Naive thymus-derived CD4-positive, alpha-beta T cell (primary cell): ENCODE measurements at regions of chr13 and their contacts with region 1.

Region 1: DNA sequence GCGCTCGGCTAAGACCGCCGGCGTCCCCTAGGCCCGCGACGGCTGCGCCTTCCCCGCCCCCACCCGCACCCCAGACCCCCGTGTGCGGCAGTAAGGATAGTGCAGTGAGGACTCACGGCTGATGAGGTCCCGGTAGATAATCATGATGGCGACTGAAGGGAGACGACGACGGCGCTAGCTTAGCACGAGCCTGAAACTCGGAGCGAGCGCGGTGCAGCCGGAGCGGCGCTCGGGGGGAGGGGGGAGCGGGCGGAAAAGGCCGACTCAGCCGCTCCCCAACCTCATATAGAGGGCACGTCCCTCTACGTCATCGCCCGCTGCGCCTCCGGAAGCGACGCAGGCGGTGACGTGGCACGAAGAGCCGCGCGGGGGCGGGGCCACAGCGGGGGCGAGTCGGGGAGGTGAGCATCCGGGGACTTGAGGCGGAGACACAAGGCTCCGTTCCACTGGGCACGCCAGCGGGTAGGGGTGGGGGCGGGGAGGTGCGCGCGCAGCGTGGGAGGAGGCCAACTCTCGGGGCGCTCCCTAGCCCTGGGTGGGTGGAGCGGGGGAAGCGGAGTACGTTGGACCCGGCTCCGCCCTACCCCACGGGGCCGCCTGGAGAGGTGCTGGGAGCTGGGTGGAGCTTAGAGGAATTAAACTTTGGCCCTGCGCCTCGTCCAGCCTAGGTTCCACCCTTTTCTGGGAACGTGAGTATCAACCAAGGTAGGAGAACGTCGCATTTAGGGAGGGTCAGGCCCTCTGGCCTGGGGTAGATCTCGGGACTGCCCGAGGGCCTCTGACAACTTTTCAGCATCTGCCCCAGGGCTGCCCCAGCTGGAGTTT is at the start of gene TPT1:
- DNase-seq: peak; percentile 99 to 100 (median 99)
- ATAC-seq: peak; percentile 91
- H3K4me3 ChIP-seq: peak within 1 kb of the TSS; percentile 94
- H3K4me3 Mint-ChIP-seq: peak within 1 kb of the TSS; percentile 95 to 100 (median 98)
- H3K27ac ChIP-seq: peak within 1 kb of the TSS; percentile 99
- H3K27ac Mint-ChIP-seq: peak within 1 kb of the TSS; percentile 92 to 100 (median 99)
- H3K4me1 ChIP-seq: peaks cover 35 to 43% of the 10 kb centered on the region in 2 donors
- H3K4me1 Mint-ChIP-seq: peaks cover 35 to 70% (median 57%) of the 10 kb centered on the region in 7 donors
- H3K27me3 ChIP-seq: no peaks in the 10 kb centered on the region
- H3K27me3 Mint-ChIP-seq: no peaks in the 10 kb centered on the region
- total RNA-seq, gene TPT1: 4,230 to 13,134 (median 7,796) TPM

Region 2: GRCh38 chr13:44988973-44989817 is 351.9 kb before region 1 on chr13 and contains the starts of genes GPALPP1 and NUFIP1:
- CTCF ChIA-PET with region 1: no interaction called
- POLR2A ChIA-PET with region 1: no interaction called
- intact Hi-C with region 1: loop called (anchors 1 kb)
- DNase-seq: peak; percentile 79 to 94 (median 90)
- ATAC-seq: peak; percentile 98
- H3K4me3 ChIP-seq: peak within 1 kb of the TSS; percentile 94
- H3K4me3 Mint-ChIP-seq: peak within 1 kb of the TSS; percentile 96 to 100 (median 98)
- H3K27ac ChIP-seq: peak within 1 kb of the TSS; percentile 95
- H3K27ac Mint-ChIP-seq: peak within 1 kb of the TSS; percentile 91 to 99 (median 98)
- H3K4me1 ChIP-seq: peaks cover 18 to 27% of the 10 kb centered on the region in 2 donors
- H3K4me1 Mint-ChIP-seq: peaks cover 42 to 81% (median 68%) of the 10 kb centered on the region in 7 donors
- H3K27me3 ChIP-seq: no peaks in the 10 kb centered on the region
- H3K27me3 Mint-ChIP-seq: no peaks in the 10 kb centered on the region
- total RNA-seq, gene GPALPP1: 29.7 to 43.1 (median 33.0) TPM
- total RNA-seq, gene NUFIP1: 3.7 to 6.6 (median 5.4) TPM

Region 3: DNA sequence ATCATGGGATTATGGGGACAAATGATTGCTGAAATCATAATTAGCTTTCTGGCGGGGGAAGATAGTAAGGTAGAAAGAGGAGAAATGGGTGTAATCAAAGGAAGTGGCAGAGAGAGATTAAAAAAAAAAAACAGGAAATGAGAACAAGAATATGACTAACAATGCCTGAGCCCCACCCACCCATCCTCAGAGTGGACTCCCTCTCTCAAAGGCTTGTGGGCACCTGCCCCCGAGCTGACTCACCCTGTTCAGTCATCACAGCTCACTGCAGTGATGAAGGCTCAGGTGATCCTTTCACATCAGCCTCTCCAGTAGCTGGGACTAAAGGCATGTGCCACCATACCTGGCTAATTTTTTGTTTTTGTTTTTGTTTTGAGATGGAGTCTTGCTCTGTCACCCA is 26.2 kb after region 1 on chr13:
- CTCF ChIA-PET with region 1: interaction called, 5 read pairs
- POLR2A ChIA-PET with region 1: interaction called, 112 read pairs
- intact Hi-C with region 1: loop called (anchors 1 kb)
- DNase-seq: peak; percentile 38 to 93 (median 82)
- ATAC-seq: peak; percentile 99
- H3K4me3 ChIP-seq: no peak overlapping the region
- H3K4me3 Mint-ChIP-seq: peak overlapping the region; percentile 48 to 80 (median 67)
- H3K27ac ChIP-seq: peak overlapping the region; percentile 31
- H3K27ac Mint-ChIP-seq: peak overlapping the region; percentile 81 to 96 (median 90)
- H3K4me1 ChIP-seq: peaks cover 25 to 27% of the 10 kb centered on the region in 2 donors
- H3K4me1 Mint-ChIP-seq: peaks cover 48 to 62% (median 60%) of the 10 kb centered on the region in 7 donors
- H3K27me3 ChIP-seq: no peaks in the 10 kb centered on the region
- H3K27me3 Mint-ChIP-seq: no peaks in the 10 kb centered on the region

Region 4: GRCh38 chr13:45417790-45418534 is 76.8 kb after region 1 on chr13 and contains the start of gene SLC25A30:
- CTCF ChIA-PET with region 1: no interaction called
- POLR2A ChIA-PET with region 1: interaction called, 21 read pairs
- intact Hi-C with region 1: loop called (anchors 1 kb)
- DNase-seq: peak; percentile 73 to 90 (median 87)
- ATAC-seq: peak; percentile 97
- H3K4me3 ChIP-seq: peak within 1 kb of the TSS; percentile 97
- H3K4me3 Mint-ChIP-seq: peak within 1 kb of the TSS; percentile 90 to 98 (median 96)
- H3K27ac ChIP-seq: peak within 1 kb of the TSS; percentile 79
- H3K27ac Mint-ChIP-seq: peak within 1 kb of the TSS; percentile 92 to 99 (median 96)
- H3K4me1 ChIP-seq: peaks cover 4 to 21% of the 10 kb centered on the region in 2 donors
- H3K4me1 Mint-ChIP-seq: peaks cover 0 to 36% (median 27%) of the 10 kb centered on the region in 7 donors
- H3K27me3 ChIP-seq: no peaks in the 10 kb centered on the region
- H3K27me3 Mint-ChIP-seq: no peaks in the 10 kb centered on the region
- total RNA-seq, gene SLC25A30: 13.3 to 29.4 (median 23.6) TPM

Region 5: GRCh38 chr13:46796515-46797474 is 1455.7 kb after region 1 on chr13 and contains the start of gene ESD:
- CTCF ChIA-PET with region 1: no interaction called
- POLR2A ChIA-PET with region 1: interaction called, 3 read pairs
- intact Hi-C with region 1: loop called in 1 of 2 experiments (anchors 1 kb)
- DNase-seq: peak; percentile 75 to 92 (median 85)
- ATAC-seq: peak; percentile 97
- H3K4me3 ChIP-seq: peak within 1 kb of the TSS; percentile 85
- H3K4me3 Mint-ChIP-seq: peak within 1 kb of the TSS; percentile 91 to 99 (median 93)
- H3K27ac ChIP-seq: peak within 1 kb of the TSS; percentile 82
- H3K27ac Mint-ChIP-seq: peak within 1 kb of the TSS; percentile 92 to 99 (median 98)
- H3K4me1 ChIP-seq: peaks cover 14 to 33% of the 10 kb centered on the region in 2 donors
- H3K4me1 Mint-ChIP-seq: peaks cover 20 to 53% (median 48%) of the 10 kb centered on the region in 7 donors
- H3K27me3 ChIP-seq: no peaks in the 10 kb centered on the region
- H3K27me3 Mint-ChIP-seq: peaks cover 0 to 7% (median 0%) of the 10 kb centered on the region in 5 donors
- total RNA-seq, gene ESD: 35.3 to 80.1 (median 57.0) TPM